Mammary epithelial cell (primary cell): ENCODE measurements at regions of chr2 and their contacts with region 1.

Region 1: DNA sequence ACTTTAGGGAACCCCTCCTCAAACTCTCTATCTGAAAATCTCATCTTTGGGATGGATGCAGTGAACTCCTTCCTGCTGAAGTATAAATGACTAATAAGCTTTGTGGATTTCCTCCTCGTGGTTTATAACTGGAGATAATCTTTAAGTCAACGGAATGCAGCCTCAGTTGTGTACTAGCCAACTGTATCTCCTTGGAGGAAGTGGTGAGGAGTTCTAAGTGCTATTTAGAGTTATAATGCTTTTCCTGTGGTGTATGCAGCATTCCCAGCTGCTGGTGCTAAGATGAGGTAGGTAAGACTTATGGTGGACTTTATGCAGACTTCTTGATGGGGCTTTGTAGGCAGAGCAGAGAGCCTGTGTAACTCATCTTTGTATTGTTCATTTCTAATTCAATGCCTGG is 90.9 kb downstream of the LYPD6B start:
- DNase-seq: no peak
- H3K4me3 ChIP-seq: no peak overlapping the region
- H3K27ac ChIP-seq: no peak overlapping the region
- H3K4me1 ChIP-seq: no peaks in the 10 kb centered on the region
- H3K27me3 ChIP-seq: no peaks in the 10 kb centered on the region
- CTCF ChIP-seq: no peak

Region 2: DNA sequence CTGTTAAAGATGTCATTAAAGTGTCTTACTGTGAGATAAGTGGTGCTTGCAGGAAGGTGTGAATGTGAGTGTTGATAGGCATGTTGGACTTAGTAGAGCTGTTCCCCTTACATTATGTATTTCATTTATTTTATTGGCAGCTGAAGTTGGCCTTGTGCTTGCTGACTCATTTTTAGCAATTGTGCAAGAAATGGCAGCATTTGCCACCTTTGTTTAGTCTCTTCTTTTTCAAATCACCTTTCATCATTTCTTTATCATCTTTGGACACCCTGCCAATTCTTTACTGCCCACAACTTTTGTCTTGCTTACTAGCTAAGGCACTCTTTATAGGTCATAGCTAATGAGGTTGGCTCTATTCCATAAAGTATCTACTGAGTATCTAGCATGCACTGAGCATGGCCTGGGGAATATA is 70.7 kb after region 1 on chr2:
- CTCF ChIA-PET with region 1: no interaction called
- dilution Hi-C with region 1: loop called (anchors 5 kb)
- in situ Hi-C with region 1: no loop called
- intact Hi-C with region 1: no loop called
- DNase-seq: peak; percentile 69
- H3K4me3 ChIP-seq: no peak overlapping the region
- H3K27ac ChIP-seq: no peak overlapping the region
- H3K4me1 ChIP-seq: peaks cover 6% of the 10 kb centered on the region
- H3K27me3 ChIP-seq: no peaks in the 10 kb centered on the region
- CTCF ChIP-seq: no peak